Kidney (tissue), 22 donors: ENCODE measurements at regions of chr13 and their contacts with region 1.

Region 1: GRCh38 chr13:39616087-39616694 is 13.2 kb upstream of the LHFPL6 start:
- DNase-seq: peak in 4 of 5 donors; percentile 58 to 88 (median 74)
- H3K4me3 ChIP-seq: no peak overlapping the region
- H3K27ac ChIP-seq: no peak overlapping the region
- H3K4me1 ChIP-seq: no peaks in the 10 kb centered on the region
- H3K27me3 ChIP-seq: no peaks in the 10 kb centered on the region
- CTCF ChIP-seq: peak; percentile 88

Region 2: GRCh38 chr13:39047560-39047959 is 568.6 kb before region 1 on chr13:
- intact Hi-C with region 1: loop called (anchors 10 kb)
- DNase-seq: peak in 2 of 5 donors; percentile 34 to 43
- H3K4me3 ChIP-seq: no peak overlapping the region
- H3K27ac ChIP-seq: no peak overlapping the region
- H3K4me1 ChIP-seq: no peaks in the 10 kb centered on the region
- H3K27me3 ChIP-seq: no peaks in the 10 kb centered on the region
- CTCF ChIP-seq: no peak

Region 3: GRCh38 chr13:39144941-39145533 is 471.2 kb before region 1 on chr13:
- intact Hi-C with region 1: loop called (anchors 10 kb)
- DNase-seq: peak; percentile 34 to 82 (median 46)
- H3K4me3 ChIP-seq: peak overlapping the region in 2 of 3 donors; percentile 6 to 32
- H3K27ac ChIP-seq: no peak overlapping the region
- H3K4me1 ChIP-seq: no peaks in the 10 kb centered on the region
- H3K27me3 ChIP-seq: no peaks in the 10 kb centered on the region
- CTCF ChIP-seq: peak; percentile 76

Region 4: DNA sequence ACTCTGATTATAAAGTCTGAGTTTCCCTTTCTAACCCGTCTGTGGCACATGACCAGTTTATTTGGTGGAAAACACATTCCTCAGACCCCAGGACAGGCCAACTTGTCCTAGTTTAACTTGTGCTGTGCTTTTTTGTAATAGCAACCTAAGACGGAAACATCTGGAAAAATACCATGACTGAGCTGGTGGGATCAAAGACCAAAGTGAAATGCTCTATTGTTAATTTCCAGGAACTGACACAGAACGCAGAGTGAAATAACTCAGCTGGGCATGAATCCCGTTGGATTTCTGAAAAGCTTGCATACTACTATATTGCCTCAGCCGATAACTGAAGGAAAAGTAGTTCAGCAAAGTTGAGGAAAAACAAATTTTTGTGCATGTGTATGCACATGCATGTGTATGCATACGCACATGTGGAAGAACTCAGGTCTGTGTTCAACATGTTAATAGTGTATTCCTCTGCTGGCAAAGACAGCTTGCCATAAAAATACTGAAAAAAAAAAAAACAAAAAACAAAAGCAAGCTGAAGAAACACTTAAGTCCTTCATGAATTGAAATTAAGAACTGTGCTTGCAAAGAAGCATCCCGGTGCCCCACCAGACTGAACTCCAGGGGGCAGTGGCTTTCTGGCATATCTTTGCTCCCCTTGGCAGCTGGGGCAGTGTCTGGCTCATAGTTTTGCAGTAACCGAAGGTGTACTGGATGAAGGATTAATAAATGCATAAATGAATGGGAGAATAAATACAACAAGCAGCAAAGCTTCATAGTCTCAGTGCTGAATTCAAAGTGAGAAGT is 201.0 kb before region 1 on chr13:
- intact Hi-C with region 1: loop called (anchors 10 kb)
- DNase-seq: peak in 2 of 5 donors; percentile 49 to 80
- H3K4me3 ChIP-seq: no peak overlapping the region
- H3K27ac ChIP-seq: no peak overlapping the region
- H3K4me1 ChIP-seq: no peaks in the 10 kb centered on the region
- H3K27me3 ChIP-seq: no peaks in the 10 kb centered on the region
- CTCF ChIP-seq: peak; percentile 46

Region 5: GRCh38 chr13:39803179-39803578 is 187.0 kb after region 1 on chr13:
- intact Hi-C with region 1: no loop called
- DNase-seq: no peak
- H3K4me3 ChIP-seq: no peak overlapping the region
- H3K27ac ChIP-seq: no peak overlapping the region
- H3K4me1 ChIP-seq: no peaks in the 10 kb centered on the region
- H3K27me3 ChIP-seq: no peaks in the 10 kb centered on the region
- CTCF ChIP-seq: no peak